OCI-LY7 (cell line): ENCODE measurements at regions of chr16 and their contacts with region 1.

Region 1: DNA sequence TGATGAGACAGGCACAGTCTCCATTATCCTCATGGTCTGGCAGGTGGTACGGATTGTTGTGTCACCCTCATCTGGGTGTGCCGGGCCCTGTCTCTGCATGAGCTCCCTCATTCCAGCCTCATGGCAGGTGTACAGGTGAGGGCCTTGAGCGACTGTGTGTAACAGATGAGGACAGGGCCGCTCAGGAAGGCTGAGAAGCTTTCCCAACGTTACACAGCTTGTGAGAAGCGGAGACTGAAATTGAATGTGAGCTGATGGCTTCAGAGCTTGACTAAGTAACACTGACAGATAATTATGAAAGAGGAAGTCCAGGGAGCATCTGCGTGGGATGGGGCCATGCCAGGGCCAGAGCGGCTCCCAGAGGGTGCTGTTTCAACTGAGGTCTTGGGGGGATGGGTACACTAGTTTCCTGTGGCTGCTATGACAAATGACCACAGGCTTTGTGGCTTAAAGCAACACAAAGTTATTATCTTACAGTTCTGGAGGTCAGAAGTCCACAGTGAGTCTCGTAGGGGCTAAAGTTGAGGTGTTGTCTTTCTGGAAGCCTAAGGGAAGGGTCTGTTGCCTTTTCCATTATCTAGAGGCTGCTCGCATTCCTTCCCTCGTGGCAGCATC is 36.7 kb downstream of the CMIP start:
- DNase-seq: peak; percentile 91
- H3K4me3 ChIP-seq: peak overlapping the region; percentile 52
- H3K27ac ChIP-seq: peak overlapping the region; percentile 93
- H3K4me1 ChIP-seq: peaks cover 75% of the 10 kb centered on the region
- CTCF ChIP-seq: peak; percentile 50

Region 2: GRCh38 chr16:81410643-81411293 is 70.5 kb before region 1 on chr16:
- CTCF ChIA-PET with region 1: no interaction called
- POLR2A ChIA-PET with region 1: interaction called, 5 read pairs
- intact Hi-C with region 1: loop called (anchors 5 kb)
- DNase-seq: peak; percentile 62
- H3K4me3 ChIP-seq: no peak overlapping the region
- H3K27ac ChIP-seq: no peak overlapping the region
- H3K4me1 ChIP-seq: peaks cover 48% of the 10 kb centered on the region
- CTCF ChIP-seq: no peak

Region 3: GRCh38 chr16:81429045-81429521 is 52.2 kb before region 1 on chr16:
- CTCF ChIA-PET with region 1: no interaction called
- POLR2A ChIA-PET with region 1: interaction called, 23 read pairs
- intact Hi-C with region 1: loop called (anchors 1 kb)
- DNase-seq: peak; percentile 77
- H3K4me3 ChIP-seq: no peak overlapping the region
- H3K27ac ChIP-seq: no peak overlapping the region
- H3K4me1 ChIP-seq: peaks cover 74% of the 10 kb centered on the region
- CTCF ChIP-seq: peak; percentile 78

Region 4: GRCh38 chr16:81445975-81446906 is 35.1 kb before region 1 on chr16:
- CTCF ChIA-PET with region 1: interaction called, 3 read pairs
- POLR2A ChIA-PET with region 1: interaction called, 7 read pairs
- intact Hi-C with region 1: loop called (anchors 2 kb)
- DNase-seq: peak; percentile 36
- H3K4me3 ChIP-seq: peak overlapping the region; percentile 93
- H3K27ac ChIP-seq: peak overlapping the region; percentile 61
- H3K4me1 ChIP-seq: peaks cover 44% of the 10 kb centered on the region
- CTCF ChIP-seq: no peak

Region 5: GRCh38 chr16:81469710-81470535 is 11.4 kb before region 1 on chr16:
- CTCF ChIA-PET with region 1: interaction called, 7 read pairs
- POLR2A ChIA-PET with region 1: interaction called, 6 read pairs
- intact Hi-C with region 1: loop called (anchors 1 kb)
- DNase-seq: peak; percentile 87
- H3K4me3 ChIP-seq: peak overlapping the region; percentile 51
- H3K27ac ChIP-seq: peak overlapping the region; percentile 96
- H3K4me1 ChIP-seq: peaks cover 42% of the 10 kb centered on the region
- CTCF ChIP-seq: 0 out of 2 replicates have a peak, but pooled peaks have one; percentile 21

Region 6: GRCh38 chr16:81505011-81505661 is 23.8 kb after region 1 on chr16:
- CTCF ChIA-PET with region 1: interaction called, 3 read pairs
- POLR2A ChIA-PET with region 1: interaction called, 6 read pairs
- intact Hi-C with region 1: loop called (anchors 2 kb)
- DNase-seq: peak; percentile 46
- H3K4me3 ChIP-seq: no peak overlapping the region
- H3K27ac ChIP-seq: no peak overlapping the region
- H3K4me1 ChIP-seq: peaks cover 20% of the 10 kb centered on the region
- CTCF ChIP-seq: no peak

Region 7: GRCh38 chr16:81519298-81520150 is 38.2 kb after region 1 on chr16:
- CTCF ChIA-PET with region 1: interaction called, 4 read pairs
- POLR2A ChIA-PET with region 1: interaction called, 10 read pairs
- intact Hi-C with region 1: loop called (anchors 2 kb)
- DNase-seq: peak; percentile 41
- H3K4me3 ChIP-seq: peak overlapping the region; percentile 5
- H3K27ac ChIP-seq: peak overlapping the region; percentile 33
- H3K4me1 ChIP-seq: peaks cover 43% of the 10 kb centered on the region
- CTCF ChIP-seq: no peak